Activated CD4-positive, alpha-beta T cell treated with anti-CD3 and anti-CD28 coated beads, Interleukin-2, amount 10 ng/mL, durations not matched to agents 7 days and 5 days (primary cell): ENCODE measurements at regions of chr4 and their contacts with region 1.

Region 1: GRCh38 chr4:186201535-186202230 is 10.3 kb downstream of the CYP4V2 start:
- DNase-seq: peak; percentile 61
- H3K4me3 Mint-ChIP-seq: no peak overlapping the region
- H3K27ac Mint-ChIP-seq: peak overlapping the region; percentile 0
- H3K4me1 Mint-ChIP-seq: peaks cover 14% of the 10 kb centered on the region
- H3K27me3 Mint-ChIP-seq: no peaks in the 10 kb centered on the region

Region 2: DNA sequence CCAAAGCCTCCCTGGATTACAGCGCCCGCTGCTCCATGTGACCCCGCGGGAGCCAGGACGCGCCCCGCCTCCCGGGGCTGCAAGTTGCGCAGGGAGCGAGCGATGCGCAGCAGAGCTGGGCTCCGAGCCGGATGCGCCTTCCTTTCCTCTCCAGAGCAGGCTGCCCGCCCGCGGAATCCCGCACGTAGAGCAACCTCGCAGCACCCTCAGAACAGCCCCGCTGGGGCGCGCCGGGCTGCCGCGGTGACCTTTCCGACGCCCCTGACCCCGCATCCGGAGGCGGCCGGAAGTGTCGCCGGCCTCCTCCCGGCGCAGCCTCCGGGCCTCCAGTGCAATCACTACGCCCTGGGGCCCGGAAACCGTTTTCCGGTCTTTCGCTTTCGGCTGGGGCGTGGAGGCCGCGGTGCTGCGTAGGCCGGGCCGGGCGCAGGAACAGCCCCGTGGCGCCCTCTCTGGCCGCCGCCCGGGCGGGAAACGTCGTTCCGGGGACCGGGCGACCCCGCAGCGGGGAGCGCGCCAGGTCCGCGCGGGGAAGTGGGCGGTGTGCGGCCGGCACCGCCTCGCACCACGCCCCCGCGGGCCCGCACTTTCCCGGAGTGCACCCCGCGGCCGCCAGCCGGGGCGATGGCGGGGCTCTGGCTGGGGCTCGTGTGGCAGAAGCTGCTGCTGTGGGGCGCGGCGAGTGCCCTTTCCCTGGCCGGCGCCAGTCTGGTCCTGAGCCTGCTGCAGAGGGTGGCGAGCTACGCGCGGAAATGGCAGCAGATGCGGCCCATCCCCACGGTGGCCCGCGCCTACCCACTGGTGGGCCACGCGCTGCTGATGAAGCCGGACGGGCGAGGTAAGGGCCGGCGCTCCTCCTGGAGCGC is 10.2 kb before region 1 on chr4 and contains the start of gene CYP4V2:
- CTCF ChIA-PET with region 1: interaction called, 15 read pairs
- POLR2A ChIA-PET with region 1: no interaction called
- DNase-seq: peak; percentile 89
- H3K4me3 Mint-ChIP-seq: peak within 1 kb of the TSS; percentile 88
- H3K27ac Mint-ChIP-seq: peak within 1 kb of the TSS; percentile 96
- H3K4me1 Mint-ChIP-seq: peaks cover 34% of the 10 kb centered on the region
- H3K27me3 Mint-ChIP-seq: no peaks in the 10 kb centered on the region
- total RNA-seq, gene CYP4V2: 16.6 to 16.8 TPM

Region 3: GRCh38 chr4:186326391-186326790 is 124.7 kb after region 1 on chr4:
- CTCF ChIA-PET with region 1: no interaction called
- POLR2A ChIA-PET with region 1: no interaction called
- DNase-seq: no peak
- H3K4me3 Mint-ChIP-seq: no peak overlapping the region
- H3K27ac Mint-ChIP-seq: no peak overlapping the region
- H3K4me1 Mint-ChIP-seq: no peaks in the 10 kb centered on the region
- H3K27me3 Mint-ChIP-seq: no peaks in the 10 kb centered on the region